AG04449 (cell line): ENCODE measurements at regions of chr1 and their contacts with region 1.

Region 1: DNA sequence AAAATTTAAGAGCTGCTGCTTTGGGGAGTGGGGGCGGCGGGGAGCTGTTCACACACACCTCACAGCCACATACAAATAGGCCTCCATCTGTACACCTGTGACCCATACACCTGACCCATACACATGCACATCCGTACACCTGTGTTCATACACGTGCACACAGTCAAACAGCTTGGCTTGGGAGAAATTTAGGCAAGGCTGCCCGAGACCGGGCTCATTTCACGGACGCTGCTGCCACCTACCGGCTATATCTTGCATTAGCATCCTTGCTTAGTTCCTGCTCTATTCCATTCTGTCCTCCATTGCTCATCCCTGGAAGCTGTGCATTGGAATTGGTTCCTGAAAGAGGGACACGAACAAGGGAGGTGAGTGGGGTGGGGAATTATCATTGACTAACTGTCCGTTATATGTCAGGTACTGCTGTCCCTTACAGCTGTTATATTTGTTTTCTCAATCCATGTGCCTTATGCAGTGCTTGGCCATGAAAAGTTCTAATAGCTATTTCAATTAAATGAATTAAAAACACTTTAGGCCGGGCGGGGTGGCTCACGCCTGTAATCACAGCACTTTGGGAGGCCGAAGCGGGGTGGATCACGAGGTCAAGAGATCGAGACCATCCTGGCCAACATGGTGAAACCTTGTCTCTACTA is 37.1 kb upstream of the EPB41 start:
- DNase-seq: no peak
- H3K4me3 ChIP-seq: no peak overlapping the region
- CTCF ChIP-seq: peak; percentile 82

Region 2: GRCh38 chr1:28359592-28360239 is 517.5 kb before region 1 on chr1:
- CTCF ChIA-PET with region 1: interaction called, 17 read pairs
- POLR2A ChIA-PET with region 1: no interaction called
- DNase-seq: no peak
- H3K4me3 ChIP-seq: no peak overlapping the region
- CTCF ChIP-seq: peak; percentile 57

Region 3: DNA sequence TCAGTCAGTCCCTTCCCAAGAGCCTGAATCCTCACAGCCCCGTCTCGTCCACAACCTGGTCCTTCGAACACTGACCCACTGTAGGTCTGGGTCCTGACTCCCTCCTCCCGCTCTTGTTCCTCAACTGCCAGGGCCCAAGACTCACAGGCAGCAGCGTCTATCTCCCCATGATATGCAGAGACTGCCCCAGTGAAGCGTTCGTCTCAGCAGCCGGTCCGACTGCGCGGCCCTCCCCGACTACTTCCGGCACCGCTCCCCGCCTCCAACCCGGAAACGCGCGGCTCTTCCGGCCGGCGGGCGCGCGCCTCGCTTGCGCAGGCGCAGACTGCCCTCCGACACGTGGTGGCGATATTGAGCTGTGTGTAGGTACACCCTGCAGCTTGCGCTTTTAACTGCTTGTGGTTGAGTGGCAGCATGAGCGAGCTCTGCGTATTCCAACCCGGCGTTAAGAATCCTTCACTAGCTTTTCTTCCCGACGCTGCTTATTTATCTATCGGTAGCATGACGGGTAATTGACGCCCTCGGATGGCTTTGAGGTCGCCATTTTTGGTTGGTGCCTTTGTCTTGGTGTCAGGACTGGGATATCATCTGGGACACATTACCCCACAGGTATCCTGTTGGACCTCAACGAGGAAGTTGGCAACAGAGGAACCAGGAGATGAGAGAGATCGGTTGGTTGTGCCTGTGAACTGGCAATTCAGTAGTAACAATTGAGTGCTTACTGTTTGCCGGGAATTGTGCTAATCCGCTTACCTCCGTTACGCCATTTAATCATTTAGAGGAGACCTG is 234.2 kb before region 1 on chr1 and contains the start of gene TAF12:
- CTCF ChIA-PET with region 1: interaction called, 12 read pairs
- POLR2A ChIA-PET with region 1: interaction called, 15 read pairs
- DNase-seq: peak; percentile 60
- H3K4me3 ChIP-seq: peak within 1 kb of the TSS; percentile 97
- CTCF ChIP-seq: peak; percentile 39

Region 4: DNA sequence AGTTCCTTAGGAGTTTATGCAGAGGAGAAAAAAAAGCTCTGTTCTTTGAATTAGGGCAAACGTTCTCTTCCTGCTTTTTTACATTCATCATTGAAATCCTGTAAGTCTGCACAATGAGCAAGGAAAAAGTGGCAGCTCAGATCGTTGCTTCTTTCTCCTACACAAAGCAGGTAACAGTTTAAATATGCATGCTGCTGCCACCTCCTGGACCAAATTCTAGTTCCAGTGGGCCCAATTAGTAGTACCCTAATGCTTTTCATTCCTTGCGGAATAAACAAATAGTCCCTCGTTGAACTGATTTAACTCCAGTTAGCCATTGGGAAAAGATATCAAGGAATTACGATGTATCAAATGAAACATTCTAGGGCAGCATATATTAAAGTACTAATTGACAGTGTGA is 120.4 kb before region 1 on chr1:
- CTCF ChIA-PET with region 1: interaction called, 15 read pairs
- POLR2A ChIA-PET with region 1: no interaction called
- DNase-seq: no peak
- H3K4me3 ChIP-seq: no peak overlapping the region
- CTCF ChIP-seq: no peak

Region 5: GRCh38 chr1:28804071-28804470 is 73.2 kb before region 1 on chr1:
- CTCF ChIA-PET with region 1: interaction called, 13 read pairs
- POLR2A ChIA-PET with region 1: no interaction called
- DNase-seq: no peak
- H3K4me3 ChIP-seq: no peak overlapping the region
- CTCF ChIP-seq: no peak

Region 6: DNA sequence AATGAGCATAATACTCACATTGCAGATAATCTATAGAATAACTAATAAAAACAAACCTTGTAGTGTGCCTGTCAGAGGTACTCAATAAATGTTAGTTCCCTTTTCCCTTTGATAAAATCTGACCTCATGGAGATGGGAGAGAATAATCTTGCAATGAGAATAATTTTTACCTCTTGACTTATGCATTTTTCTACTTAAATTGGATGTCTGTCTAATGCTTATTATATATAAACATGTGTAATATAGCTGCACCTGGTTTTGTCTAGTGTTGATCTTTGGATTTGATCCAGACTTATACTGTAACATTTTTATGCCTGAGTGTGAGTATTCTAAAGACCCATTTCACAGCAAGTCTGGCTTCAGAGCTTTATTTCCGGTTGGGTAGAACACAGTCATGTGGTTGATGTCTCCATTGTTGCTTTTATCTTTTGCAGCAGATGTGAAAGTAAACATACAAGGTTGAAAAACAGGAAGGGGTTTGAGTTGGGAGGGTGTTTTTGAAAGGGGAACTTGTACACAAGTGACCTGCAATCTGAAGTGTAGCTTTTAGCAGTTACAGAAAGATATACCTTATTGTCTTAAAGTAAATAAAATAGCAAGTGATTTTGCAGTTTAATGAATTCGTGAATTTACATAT is 49.5 kb after region 1 on chr1:
- CTCF ChIA-PET with region 1: no interaction called
- POLR2A ChIA-PET with region 1: no interaction called
- DNase-seq: no peak
- H3K4me3 ChIP-seq: no peak overlapping the region
- CTCF ChIP-seq: no peak

Region 7: GRCh38 chr1:29202584-29203340 is 325.5 kb after region 1 on chr1:
- CTCF ChIA-PET with region 1: interaction called, 327 read pairs
- POLR2A ChIA-PET with region 1: interaction called, 3 read pairs
- DNase-seq: peak; percentile 91
- H3K4me3 ChIP-seq: no peak overlapping the region
- CTCF ChIP-seq: peak; percentile 93